ENCODE measurements at regions of chr5 and their contacts with region 1.

Region 1: DNA sequence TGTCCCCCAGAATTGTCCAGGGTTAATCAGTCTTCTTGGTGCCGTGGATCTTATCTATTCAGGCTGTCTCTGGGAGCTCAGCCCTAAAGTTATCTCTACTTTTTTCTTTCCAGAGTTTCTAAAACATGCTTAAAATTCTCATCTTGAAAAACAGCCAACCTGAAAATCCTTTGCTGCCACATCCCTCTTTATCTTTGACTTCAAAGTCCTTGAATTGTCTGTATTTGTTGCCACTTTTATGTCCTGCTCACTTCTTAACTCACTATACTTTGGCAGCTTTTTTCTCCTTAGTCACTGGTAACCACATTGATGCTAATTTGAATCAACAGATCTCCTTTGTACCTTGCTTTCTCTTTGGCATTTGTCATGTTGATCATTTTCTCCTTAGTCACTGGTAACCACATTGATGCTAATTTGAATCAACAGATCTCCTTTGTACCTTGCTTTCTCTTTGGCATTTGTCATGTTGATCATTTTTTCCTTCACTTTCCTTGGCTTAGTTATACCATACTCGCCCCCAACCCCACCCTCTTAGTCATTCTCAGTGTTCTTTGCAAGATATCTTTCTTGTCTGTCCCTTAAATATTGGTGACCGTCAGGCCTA is 8.5 kb downstream of the DMXL1 start:
- DNase-seq: peak; percentile 65
- H3K4me3 Mint-ChIP-seq: peak overlapping the region; percentile 23
- H3K27ac Mint-ChIP-seq: peak overlapping the region; percentile 50
- H3K4me1 Mint-ChIP-seq: peaks cover 51% of the 10 kb centered on the region
- H3K27me3 Mint-ChIP-seq: no peaks in the 10 kb centered on the region

Region 2: GRCh38 chr5:119063579-119064379 is 15.6 kb before region 1 on chr5:
- CTCF ChIA-PET with region 1: no interaction called
- POLR2A ChIA-PET with region 1: interaction called, 3 read pairs
- intact Hi-C with region 1: loop called (anchors 1 kb)
- DNase-seq: peak; percentile 25
- H3K4me3 Mint-ChIP-seq: no peak overlapping the region
- H3K27ac Mint-ChIP-seq: peak overlapping the region; percentile 20
- H3K4me1 Mint-ChIP-seq: peaks cover 12% of the 10 kb centered on the region
- H3K27me3 Mint-ChIP-seq: no peaks in the 10 kb centered on the region

Region 3: DNA sequence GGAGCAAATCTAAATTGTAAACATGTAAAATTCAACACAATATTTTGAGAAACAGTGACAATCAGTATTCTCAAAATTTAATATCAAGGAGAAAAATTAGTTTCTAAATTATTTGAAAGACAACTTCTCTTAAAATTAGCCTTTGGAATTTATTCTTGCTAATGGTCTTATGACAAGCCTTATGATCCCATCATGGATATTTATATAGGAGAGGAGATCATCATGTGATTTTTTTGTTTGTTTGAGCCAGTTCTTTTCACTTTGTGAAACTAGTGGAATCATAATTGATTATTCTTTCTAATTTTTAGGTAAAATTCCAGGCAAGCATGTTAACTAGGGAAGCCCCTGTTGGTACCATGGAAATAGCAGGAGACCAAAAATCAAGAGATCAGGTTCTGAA is 16.2 kb after region 1 on chr5:
- CTCF ChIA-PET with region 1: no interaction called
- POLR2A ChIA-PET with region 1: no interaction called
- intact Hi-C with region 1: no loop called
- DNase-seq: no peak
- H3K4me3 Mint-ChIP-seq: no peak overlapping the region
- H3K27ac Mint-ChIP-seq: no peak overlapping the region
- H3K4me1 Mint-ChIP-seq: peaks cover 7% of the 10 kb centered on the region
- H3K27me3 Mint-ChIP-seq: no peaks in the 10 kb centered on the region

Region 4: DNA sequence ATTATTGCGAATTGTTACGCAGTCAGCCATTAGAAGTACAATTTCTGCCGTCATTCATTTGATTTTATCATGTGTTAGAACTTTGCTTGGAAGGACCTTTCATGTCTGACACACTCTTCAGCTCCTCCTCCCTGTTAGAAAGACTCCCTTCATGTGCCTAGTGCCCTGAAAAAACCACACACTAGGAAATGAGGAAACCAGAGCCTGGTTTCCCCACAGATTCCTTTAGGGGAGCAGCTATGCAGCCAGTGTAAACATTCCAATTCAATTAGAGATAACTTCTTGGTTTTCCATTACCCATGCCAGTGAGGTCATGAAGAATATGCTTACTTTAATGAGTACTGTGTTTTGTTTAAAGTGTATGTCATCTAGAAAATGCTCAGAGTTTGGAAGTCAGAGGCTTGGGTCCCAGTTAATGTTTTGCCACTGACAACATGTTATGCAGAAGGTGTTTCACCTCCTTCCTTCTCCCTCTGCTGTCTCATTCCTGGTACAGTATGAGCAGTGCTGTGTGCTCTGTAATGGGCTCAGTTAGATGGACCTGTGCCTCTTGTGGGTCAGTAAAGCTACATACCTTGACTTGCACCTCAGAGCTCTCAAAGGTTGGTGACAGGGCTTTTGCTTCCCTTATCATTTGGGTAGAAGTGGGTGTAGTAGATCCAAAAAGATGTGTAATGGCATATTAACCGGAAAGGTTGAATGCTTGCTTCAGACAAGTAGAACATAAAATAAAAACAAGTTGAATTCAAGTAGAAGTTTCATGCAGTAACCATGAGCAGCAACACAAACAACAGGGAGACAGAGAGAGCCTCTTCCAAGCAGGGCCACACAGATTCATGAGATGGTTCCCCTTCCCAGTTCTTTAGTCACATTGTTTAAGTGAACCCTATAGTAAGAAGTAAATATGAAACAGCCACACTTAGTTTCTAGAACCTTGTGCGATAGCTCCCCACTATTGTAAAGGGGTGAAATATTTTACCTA is 223.8 kb after region 1 on chr5:
- CTCF ChIA-PET with region 1: no interaction called
- POLR2A ChIA-PET with region 1: no interaction called
- intact Hi-C with region 1: loop called (anchors 1 kb)
- DNase-seq: no peak
- H3K4me3 Mint-ChIP-seq: peak overlapping the region; percentile 17
- H3K27ac Mint-ChIP-seq: peak overlapping the region; percentile 90
- H3K4me1 Mint-ChIP-seq: peaks cover 93% of the 10 kb centered on the region
- H3K27me3 Mint-ChIP-seq: no peaks in the 10 kb centered on the region

Region 5: DNA sequence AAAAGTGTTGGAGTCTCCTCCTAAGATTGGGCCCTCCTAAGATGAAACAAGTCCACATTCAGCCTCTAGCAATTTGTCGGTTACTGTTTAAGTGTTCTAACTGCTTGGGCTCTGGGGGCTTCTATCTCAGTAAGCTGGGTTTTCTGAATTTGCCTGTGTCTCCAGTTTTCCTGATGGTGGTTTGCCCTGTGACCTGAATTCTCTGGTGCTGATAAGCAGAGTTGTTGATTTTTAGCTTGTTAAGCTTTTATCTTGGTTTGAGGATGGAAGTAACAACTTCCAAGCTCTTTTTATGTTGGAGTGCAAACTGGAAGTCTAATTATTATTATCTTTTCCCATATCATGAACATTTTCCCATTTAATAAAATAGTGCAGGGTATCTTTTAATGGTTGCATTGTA is 403.7 kb after region 1 on chr5:
- CTCF ChIA-PET with region 1: no interaction called
- POLR2A ChIA-PET with region 1: no interaction called
- intact Hi-C with region 1: no loop called
- DNase-seq: no peak
- H3K4me3 Mint-ChIP-seq: no peak overlapping the region
- H3K27ac Mint-ChIP-seq: no peak overlapping the region
- H3K4me1 Mint-ChIP-seq: no peaks in the 10 kb centered on the region
- H3K27me3 Mint-ChIP-seq: no peaks in the 10 kb centered on the region